Activated CD4-positive, alpha-beta T cell treated with anti-CD3 and anti-CD28 coated beads for 36 hours (primary cell): ENCODE measurements at regions of chr1 and their contacts with region 1.

Region 1: DNA sequence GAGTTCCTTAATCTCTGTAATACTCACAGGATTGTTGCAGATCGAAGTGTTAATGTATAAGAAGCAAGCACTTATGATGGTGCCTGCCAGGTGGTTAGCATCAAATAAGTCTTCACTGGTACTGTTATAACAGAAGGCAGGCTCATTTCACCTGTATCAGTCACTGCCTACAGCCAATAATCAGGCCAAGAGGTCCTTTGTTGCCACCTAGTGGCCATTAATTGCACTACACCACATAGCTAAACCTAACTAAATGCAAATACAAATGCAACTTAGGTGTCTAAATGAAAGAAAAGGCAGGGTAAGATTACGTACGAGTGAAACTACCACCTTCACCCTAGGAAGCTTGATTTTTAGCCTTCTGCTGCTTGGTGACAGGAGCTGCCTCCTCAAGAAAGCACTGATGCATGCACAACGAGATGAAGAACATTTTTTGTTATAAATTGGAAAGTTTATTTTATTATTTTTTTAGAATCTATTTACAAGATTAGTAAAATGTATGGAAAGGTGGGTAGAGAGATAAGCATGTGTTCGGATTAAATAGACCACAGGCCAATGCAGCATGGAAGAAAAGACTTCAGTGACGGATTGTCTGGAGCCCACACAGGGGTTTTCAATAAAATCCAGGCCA is 334.8 kb upstream of the CAMK1G start:
- DNase-seq: peak; percentile 64
- ATAC-seq: peak; percentile 63
- H3K4me3 Mint-ChIP-seq: no peak overlapping the region
- H3K27ac Mint-ChIP-seq: no peak overlapping the region
- H3K4me1 Mint-ChIP-seq: no peaks in the 10 kb centered on the region
- H3K27me3 Mint-ChIP-seq: no peaks in the 10 kb centered on the region

Region 2: DNA sequence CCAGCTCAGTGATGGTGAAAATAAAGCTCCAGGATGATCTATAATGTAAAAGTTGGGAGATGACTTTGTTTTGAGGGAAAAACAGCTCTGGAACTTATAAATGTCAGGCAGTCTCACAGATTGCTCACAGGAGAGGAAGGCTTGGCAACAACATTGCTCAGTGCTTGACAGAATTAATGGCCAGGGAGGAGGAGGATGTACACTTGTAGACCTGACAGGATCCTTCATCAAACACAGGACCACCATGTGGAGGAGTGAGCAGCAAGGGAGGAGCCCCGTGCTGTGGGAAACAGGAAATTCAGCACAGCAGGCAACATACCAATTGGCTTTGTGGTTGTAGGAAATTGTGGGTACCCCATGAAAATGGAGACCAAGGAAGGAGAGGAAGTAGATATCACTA is 43.0 kb after region 1 on chr1:
- CTCF ChIA-PET with region 1: no interaction called
- POLR2A ChIA-PET with region 1: no interaction called
- intact Hi-C with region 1: loop called in 1 of 2 experiments (anchors 1 kb)
- DNase-seq: no peak
- ATAC-seq: no peak
- H3K4me3 Mint-ChIP-seq: no peak overlapping the region
- H3K27ac Mint-ChIP-seq: no peak overlapping the region
- H3K4me1 Mint-ChIP-seq: no peaks in the 10 kb centered on the region
- H3K27me3 Mint-ChIP-seq: peaks cover 10% of the 10 kb centered on the region

Region 3: GRCh38 chr1:209354111-209354839 is 105.5 kb after region 1 on chr1:
- CTCF ChIA-PET with region 1: interaction called, 3 read pairs
- POLR2A ChIA-PET with region 1: no interaction called
- intact Hi-C with region 1: loop called in 1 of 2 experiments (anchors 5 kb)
- DNase-seq: peak; percentile 75
- ATAC-seq: peak; percentile 82
- H3K4me3 Mint-ChIP-seq: no peak overlapping the region
- H3K27ac Mint-ChIP-seq: no peak overlapping the region
- H3K4me1 Mint-ChIP-seq: no peaks in the 10 kb centered on the region
- H3K27me3 Mint-ChIP-seq: no peaks in the 10 kb centered on the region